HepG2 (cell line): ENCODE measurements at regions of chr1 and their contacts with region 1.

Region 1: DNA sequence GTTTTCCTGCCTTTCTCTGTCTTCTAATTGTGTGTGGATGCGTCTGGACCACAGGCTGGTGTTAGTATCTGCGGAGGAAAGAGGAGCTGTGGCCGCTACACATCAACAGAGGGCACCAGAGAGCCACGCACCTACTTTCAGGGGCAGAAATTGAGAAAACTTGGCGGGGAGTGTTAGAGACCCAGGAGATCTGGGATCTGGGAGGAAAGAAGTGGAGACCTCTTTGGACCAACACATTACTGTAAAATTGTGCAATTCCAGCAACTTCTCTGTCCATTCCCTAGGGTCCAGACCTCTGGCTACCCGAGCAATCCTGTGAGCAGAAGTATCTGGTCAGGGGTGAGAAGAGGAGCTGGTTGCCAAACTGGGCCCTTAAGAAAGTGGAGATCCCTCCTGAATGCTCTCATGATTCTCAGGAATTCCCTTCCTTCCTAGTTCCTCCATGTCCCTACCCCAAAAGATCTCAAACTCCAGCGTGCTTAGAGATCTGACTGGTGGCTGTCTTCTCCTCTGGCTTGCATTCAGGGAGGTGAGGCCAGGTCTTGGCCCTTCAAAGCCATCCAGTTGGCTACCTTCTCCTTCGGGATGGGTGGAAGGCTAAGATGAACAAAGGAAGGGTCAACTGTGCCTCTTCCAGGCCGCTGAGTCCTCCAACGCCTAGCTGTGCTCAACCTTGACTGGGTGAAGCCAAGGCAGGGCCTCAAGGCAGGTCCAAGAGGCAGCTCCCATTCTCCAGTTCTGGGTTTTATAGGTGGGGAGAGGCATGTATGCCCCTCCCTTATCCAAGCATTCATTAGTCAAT is 1.2 kb upstream of the KIRREL1 start:
- DNase-seq: peak; percentile 13
- ATAC-seq: peak; percentile 83
- H3K4me3 ChIP-seq: no peak overlapping the region
- H3K27ac ChIP-seq: no peak overlapping the region
- H3K4me1 ChIP-seq: no peaks in the 10 kb centered on the region
- H3K27me3 ChIP-seq: peaks cover 0 to 19% of the 10 kb centered on the region in 2 experiments; a peak in 2 of 5 replicates
- CTCF ChIP-seq: peak; percentile 83
- EP300 ChIP-seq: no peak
- POLR2A ChIP-seq: no peak
- RAD21 ChIP-seq: 0 out of 2 replicates have a peak, but pooled peaks have one; percentile 26

Region 2: GRCh38 chr1:158019171-158019868 is 27.1 kb after region 1 on chr1:
- CTCF ChIA-PET with region 1: no interaction called
- POLR2A ChIA-PET with region 1: no interaction called
- in situ Hi-C with region 1: no loop called
- intact Hi-C with region 1: no loop called
- DNase-seq: peak; percentile 42
- ATAC-seq: peak; percentile 71
- H3K4me3 ChIP-seq: no peak overlapping the region
- H3K27ac ChIP-seq: no peak overlapping the region
- H3K4me1 ChIP-seq: 0 out of 2 replicates have a peak, but pooled peaks cover 9% of the 10 kb centered on the region
- H3K27me3 ChIP-seq: no peaks in the 10 kb centered on the region
- CTCF ChIP-seq: no peak
- EP300 ChIP-seq: no peak
- POLR2A ChIP-seq: no peak
- RAD21 ChIP-seq: no peak

Region 3: DNA sequence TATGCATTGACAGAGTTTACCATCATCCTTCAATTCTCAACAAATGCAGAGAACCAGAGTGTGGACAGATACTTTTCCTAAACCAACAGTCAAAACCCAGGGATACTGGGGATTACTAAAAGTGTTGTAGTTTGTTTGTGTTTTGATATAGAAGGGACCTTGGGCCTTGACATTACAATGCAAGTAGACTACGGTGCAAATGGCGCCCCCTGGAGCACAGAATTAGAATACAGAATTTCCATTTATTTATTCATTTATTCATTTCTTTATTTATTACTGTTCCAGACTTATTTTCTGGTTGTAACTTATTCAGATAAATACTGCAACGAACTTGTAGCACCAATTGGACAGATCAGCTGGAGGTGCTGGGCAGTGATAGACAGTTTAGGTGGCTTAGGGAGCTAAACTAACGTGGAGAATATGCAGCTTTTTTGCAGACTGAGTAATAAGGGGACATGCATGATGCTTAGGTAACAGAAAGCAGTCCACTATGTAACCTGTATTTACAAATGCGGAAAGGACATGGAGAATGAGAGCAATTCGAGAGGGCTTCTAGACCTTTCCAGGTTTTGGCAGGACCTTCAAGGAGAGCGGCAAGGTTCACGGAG is 43.8 kb after region 1 on chr1:
- CTCF ChIA-PET with region 1: interaction called, 19 read pairs
- POLR2A ChIA-PET with region 1: no interaction called
- in situ Hi-C with region 1: no loop called
- intact Hi-C with region 1: loop called (anchors 2 kb)
- DNase-seq: peak; percentile 5
- ATAC-seq: no peak
- H3K4me3 ChIP-seq: no peak overlapping the region
- H3K27ac ChIP-seq: no peak overlapping the region
- H3K4me1 ChIP-seq: no peaks in the 10 kb centered on the region
- H3K27me3 ChIP-seq: no peaks in the 10 kb centered on the region
- CTCF ChIP-seq: 0 out of 2 replicates have a peak, but pooled peaks have one; percentile 19
- EP300 ChIP-seq: no peak
- POLR2A ChIP-seq: no peak
- RAD21 ChIP-seq: no peak

Region 4: GRCh38 chr1:158087320-158087927 is 95.2 kb after region 1 on chr1:
- CTCF ChIA-PET with region 1: interaction called, 25 read pairs
- POLR2A ChIA-PET with region 1: no interaction called
- in situ Hi-C with region 1: loop called (anchors 10 kb)
- intact Hi-C with region 1: loop called (anchors 1 kb)
- DNase-seq: peak; percentile 80
- ATAC-seq: peak; percentile 98
- H3K4me3 ChIP-seq: no peak overlapping the region
- H3K27ac ChIP-seq: no peak overlapping the region
- H3K4me1 ChIP-seq: no peaks in the 10 kb centered on the region
- H3K27me3 ChIP-seq: no peaks in the 10 kb centered on the region
- CTCF ChIP-seq: peak; percentile 76
- EP300 ChIP-seq: no peak
- POLR2A ChIP-seq: no peak
- RAD21 ChIP-seq: peak; percentile 59

Region 5: GRCh38 chr1:158124999-158125398 is 132.8 kb after region 1 on chr1:
- CTCF ChIA-PET with region 1: interaction called, 14 read pairs
- POLR2A ChIA-PET with region 1: no interaction called
- in situ Hi-C with region 1: no loop called
- intact Hi-C with region 1: loop called (anchors 1 kb)
- DNase-seq: peak; percentile 66
- ATAC-seq: peak; percentile 91
- H3K4me3 ChIP-seq: no peak overlapping the region
- H3K27ac ChIP-seq: no peak overlapping the region
- H3K4me1 ChIP-seq: no peaks in the 10 kb centered on the region
- H3K27me3 ChIP-seq: no peaks in the 10 kb centered on the region
- CTCF ChIP-seq: peak; percentile 83
- EP300 ChIP-seq: no peak
- POLR2A ChIP-seq: no peak
- RAD21 ChIP-seq: peak; percentile 68